ENCODE measurements at regions of chr16 and their contacts with region 1.

Region 1: DNA sequence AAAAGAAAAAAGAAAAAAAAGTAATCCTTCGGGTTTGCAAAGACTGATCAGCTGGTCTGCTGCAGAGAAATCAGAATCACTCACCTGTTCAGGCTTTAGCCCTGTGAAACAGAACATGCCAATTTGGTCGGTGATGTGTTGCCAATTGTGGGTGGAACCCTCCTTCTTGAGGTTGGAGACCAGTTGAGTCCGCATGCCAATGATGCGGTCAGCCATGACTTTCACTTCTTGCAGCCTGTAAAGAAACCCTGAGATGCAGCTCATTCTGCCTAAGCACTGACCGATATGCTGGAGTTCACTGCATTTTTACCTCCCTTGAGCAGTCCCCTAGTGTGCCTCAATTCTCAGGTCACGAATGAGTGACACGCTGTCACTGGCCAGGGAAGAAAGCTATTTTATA is 24.8 kb upstream of the SLC38A7 start:
- DNase-seq: no peak
- H3K4me3 ChIP-seq: no peak overlapping the region
- H3K27ac ChIP-seq: no peak overlapping the region
- H3K4me1 ChIP-seq: no peaks in the 10 kb centered on the region
- H3K27me3 ChIP-seq: no peaks in the 10 kb centered on the region
- CTCF ChIP-seq: no peak
- POLR2A ChIP-seq: no peak

Region 2: DNA sequence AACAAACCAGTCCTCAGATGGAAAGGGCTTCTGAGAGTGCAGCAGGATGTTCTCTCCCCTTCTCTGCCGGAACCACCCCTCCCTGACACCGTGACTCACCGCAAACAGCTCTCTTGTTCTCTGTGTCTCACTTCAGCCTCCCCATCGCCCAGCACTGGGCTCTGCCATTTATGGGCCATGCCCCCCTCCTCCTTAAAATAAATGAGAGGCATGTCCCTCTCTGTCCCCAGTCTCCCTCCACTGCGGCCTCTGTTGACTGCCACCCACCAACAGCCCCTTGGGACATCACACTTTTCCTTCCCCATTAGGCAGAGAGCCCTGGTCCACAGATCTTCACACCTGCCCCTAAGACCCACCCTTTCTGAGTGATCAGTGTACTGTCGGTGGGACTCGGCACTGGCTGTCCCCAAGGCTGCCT is 1179.2 kb before region 1 on chr16:
- intact Hi-C with region 1: no loop called
- DNase-seq: no peak
- H3K4me3 ChIP-seq: no peak overlapping the region
- H3K27ac ChIP-seq: peak overlapping the region in 1 of 2 donors; percentile 48
- H3K4me1 ChIP-seq: peaks cover 14 to 17% of the 10 kb centered on the region in 2 donors
- H3K27me3 ChIP-seq: no peaks in the 10 kb centered on the region
- CTCF ChIP-seq: no peak
- POLR2A ChIP-seq: no peak

Region 3: DNA sequence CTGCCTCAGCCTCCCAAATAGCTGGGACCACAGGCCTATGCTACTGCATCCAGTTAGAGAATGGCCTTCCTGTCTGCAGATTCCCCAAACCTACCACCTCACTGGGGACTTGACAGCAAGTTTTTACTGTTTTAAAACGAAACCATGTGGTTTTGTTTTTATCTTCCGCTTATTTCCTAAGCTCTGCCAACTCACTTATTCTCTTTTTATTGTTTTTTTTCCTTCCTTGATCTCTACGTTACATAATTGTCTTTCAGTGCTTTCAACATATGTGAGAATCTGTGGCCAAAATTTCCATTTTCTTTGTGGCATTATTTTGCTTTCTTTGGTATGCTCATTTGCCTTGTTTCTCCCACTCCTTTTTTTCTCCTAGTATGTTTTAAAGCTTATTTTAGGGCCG is 10.2 kb before region 1 on chr16:
- intact Hi-C with region 1: loop called (anchors 1 kb)
- DNase-seq: no peak
- H3K4me3 ChIP-seq: no peak overlapping the region
- H3K27ac ChIP-seq: no peak overlapping the region
- H3K4me1 ChIP-seq: no peaks in the 10 kb centered on the region
- H3K27me3 ChIP-seq: no peaks in the 10 kb centered on the region
- CTCF ChIP-seq: no peak
- POLR2A ChIP-seq: no peak